Activated CD8-positive, alpha-beta memory T cell treated with anti-CD3 and anti-CD28 coated beads, Interleukin-2, amount 10 ng/mL, durations not matched to agents 7 days and 5 days (primary cell): ENCODE measurements at regions of chr9 and their contacts with region 1.

Region 1: DNA sequence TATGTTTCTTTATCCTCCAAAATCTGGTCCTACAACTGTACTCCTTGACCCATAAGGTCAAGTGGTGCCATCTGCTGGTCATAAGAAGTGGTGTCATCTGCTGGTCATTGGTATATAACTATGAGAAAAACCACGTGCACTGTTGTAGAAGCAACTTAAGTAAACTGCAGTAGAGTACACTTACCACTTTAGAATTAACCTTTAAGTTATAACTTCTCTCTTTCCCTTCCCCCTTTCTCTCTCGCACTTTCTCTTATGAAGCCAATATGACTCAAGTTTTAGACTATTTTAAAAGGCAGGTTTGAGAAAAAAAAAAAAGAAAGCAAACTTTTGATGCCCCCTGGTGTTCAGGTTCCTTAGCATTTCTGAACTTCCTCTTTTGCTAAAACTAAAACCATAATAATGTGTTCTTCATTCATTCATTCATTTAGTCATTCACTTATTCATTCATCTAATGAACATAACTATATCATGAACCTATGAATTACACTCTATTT is 12.8 kb upstream of the MTAP start:
- DNase-seq: peak; percentile 65
- ATAC-seq: peak; percentile 99
- H3K4me3 Mint-ChIP-seq: peak overlapping the region; percentile 55
- H3K27ac Mint-ChIP-seq: no peak overlapping the region
- H3K4me1 Mint-ChIP-seq: peaks cover 3% of the 10 kb centered on the region
- H3K27me3 Mint-ChIP-seq: peaks cover 38% of the 10 kb centered on the region

Region 2: DNA sequence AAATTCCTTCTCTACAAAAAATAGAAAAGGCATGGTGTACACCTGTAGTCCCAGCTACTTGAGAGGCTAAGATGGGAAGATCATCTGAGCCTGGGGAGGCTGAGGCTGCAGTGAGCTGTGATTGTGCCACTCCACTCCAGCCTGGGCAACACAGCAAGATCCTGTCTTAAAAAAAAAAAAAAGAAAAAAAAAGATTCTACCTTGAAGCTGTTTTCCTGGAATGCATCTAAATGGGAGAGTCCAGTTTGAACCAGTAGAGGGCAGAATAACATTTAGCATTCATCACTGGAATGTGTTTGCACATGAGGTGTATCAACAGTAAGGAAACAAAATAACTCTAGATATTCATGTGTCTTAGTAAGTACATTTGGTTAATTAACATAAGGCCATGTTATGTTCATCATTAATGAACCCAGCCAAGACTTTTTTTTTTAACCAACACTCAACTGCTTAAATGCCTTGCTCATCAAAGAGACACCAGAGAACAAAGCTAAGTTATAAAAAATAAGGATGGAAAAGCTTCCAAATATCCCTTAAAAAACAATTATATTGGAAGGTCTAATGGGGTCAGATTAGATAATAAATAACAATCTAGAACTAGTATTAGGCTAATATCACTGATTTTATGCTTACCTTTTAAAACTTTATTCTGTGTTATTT is 323.6 kb before region 1 on chr9:
- CTCF ChIA-PET with region 1: interaction called, 21 read pairs
- DNase-seq: no peak
- ATAC-seq: peak; percentile 51
- H3K4me3 Mint-ChIP-seq: no peak overlapping the region
- H3K27ac Mint-ChIP-seq: no peak overlapping the region
- H3K4me1 Mint-ChIP-seq: no peaks in the 10 kb centered on the region
- H3K27me3 Mint-ChIP-seq: peaks cover 36% of the 10 kb centered on the region

Region 3: DNA sequence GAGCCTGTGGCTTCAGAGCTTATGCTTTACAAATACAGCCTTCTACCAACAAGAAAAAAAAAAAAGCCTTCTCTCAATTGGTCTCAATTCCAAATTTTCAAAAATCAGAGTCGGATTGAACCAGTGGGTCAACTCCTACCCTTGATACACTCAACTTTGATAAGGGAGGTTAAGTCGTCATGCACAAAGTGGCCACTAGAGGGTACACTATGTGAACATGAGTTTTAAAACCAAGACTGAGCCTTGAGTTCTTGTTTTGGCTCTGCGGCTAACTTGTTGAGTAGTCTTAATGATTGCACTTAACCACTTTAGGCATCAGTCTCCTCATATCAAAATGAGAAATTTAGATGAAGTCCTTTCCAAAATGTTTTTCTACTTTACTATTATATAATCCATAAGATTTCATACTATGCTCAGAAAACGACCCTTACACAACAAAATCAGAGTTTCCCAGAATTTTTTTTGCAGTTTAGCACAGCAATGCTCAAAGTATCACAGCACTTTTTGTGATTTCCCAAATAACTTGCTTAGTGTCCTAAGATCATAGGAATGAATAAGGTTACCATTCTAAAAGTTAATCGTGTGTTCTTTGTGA is 80.0 kb before region 1 on chr9:
- CTCF ChIA-PET with region 1: interaction called, 17 read pairs
- DNase-seq: peak; percentile 73
- ATAC-seq: peak; percentile 60
- H3K4me3 Mint-ChIP-seq: no peak overlapping the region
- H3K27ac Mint-ChIP-seq: no peak overlapping the region
- H3K4me1 Mint-ChIP-seq: peaks cover 4% of the 10 kb centered on the region
- H3K27me3 Mint-ChIP-seq: peaks cover 38% of the 10 kb centered on the region

Region 4: GRCh38 chr9:21810388-21810787 is 20.8 kb after region 1 on chr9:
- CTCF ChIA-PET with region 1: no interaction called
- DNase-seq: no peak
- ATAC-seq: no peak
- H3K4me3 Mint-ChIP-seq: no peak overlapping the region
- H3K27ac Mint-ChIP-seq: no peak overlapping the region
- H3K4me1 Mint-ChIP-seq: peaks cover 45% of the 10 kb centered on the region
- H3K27me3 Mint-ChIP-seq: no peaks in the 10 kb centered on the region

Region 5: GRCh38 chr9:22079873-22080341 is 290.3 kb after region 1 on chr9:
- CTCF ChIA-PET with region 1: no interaction called
- DNase-seq: peak; percentile 70
- ATAC-seq: peak; percentile 88
- H3K4me3 Mint-ChIP-seq: peak overlapping the region; percentile 6
- H3K27ac Mint-ChIP-seq: peak overlapping the region; percentile 67
- H3K4me1 Mint-ChIP-seq: peaks cover 48% of the 10 kb centered on the region
- H3K27me3 Mint-ChIP-seq: peaks cover 36% of the 10 kb centered on the region

Region 6: DNA sequence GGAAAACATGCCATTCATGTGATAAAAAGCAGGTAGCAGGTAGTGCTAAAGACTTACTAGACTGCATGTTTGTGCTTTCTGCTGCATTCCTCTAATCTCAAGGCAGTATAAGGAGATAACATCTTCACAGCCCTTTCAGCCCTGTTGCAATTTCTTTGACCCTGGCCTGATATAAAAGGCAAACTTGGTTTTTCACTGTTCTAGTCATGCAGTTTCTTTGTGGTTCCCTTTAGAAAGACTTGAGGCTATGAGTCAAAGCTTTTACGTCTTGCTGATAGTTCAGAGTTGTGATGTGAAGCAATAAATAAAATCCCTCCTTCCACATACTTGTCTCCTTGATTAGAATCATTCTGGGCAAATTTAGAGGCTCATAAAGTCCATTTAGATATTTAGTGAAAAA is 308.1 kb after region 1 on chr9:
- CTCF ChIA-PET with region 1: no interaction called
- DNase-seq: no peak
- ATAC-seq: peak; percentile 82
- H3K4me3 Mint-ChIP-seq: no peak overlapping the region
- H3K27ac Mint-ChIP-seq: peak overlapping the region; percentile 58
- H3K4me1 Mint-ChIP-seq: peaks cover 34% of the 10 kb centered on the region
- H3K27me3 Mint-ChIP-seq: peaks cover 74% of the 10 kb centered on the region